Right lobe of liver (tissue), 6 donors: ENCODE measurements at regions of chr6 and their contacts with region 1.

Region 1: DNA sequence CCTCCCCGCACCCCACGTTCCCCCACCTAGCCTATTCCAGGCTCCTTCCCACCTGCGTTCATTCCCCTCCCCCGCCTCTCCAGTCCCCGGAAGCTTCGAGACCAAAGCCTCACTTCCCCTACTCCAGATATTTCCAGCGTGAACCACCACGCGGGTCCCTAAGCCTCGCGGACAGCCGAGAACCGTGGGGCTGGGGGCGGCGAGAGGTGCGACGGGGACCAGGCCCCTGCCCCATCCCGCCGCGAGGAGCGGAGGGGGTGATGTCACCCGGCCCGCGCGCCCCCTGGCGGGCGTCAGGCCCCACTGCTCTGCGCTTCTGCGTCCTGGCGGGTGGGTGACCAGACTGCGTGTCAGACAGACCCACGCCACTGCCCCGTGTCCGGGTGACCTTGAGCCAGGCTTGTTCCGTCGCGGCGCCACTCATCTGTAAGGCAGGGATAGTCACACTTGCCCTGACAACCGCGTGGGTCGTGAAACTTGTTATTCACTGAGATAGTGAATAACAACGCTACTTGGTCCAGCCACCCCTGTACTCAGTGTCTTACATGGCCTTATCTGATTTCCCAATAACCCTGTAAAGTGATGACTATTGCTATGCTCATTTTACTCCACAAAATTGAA is 9.0 kb upstream of the HSP90AB1 start:
- DNase-seq: peak; percentile 85 to 88 (median 85)
- ATAC-seq: peak; percentile 67 to 81 (median 72)
- H3K4me3 ChIP-seq: peak overlapping the region; percentile 44 to 67 (median 62)
- H3K27ac ChIP-seq: peak overlapping the region; percentile 97 to 99 (median 98)
- H3K4me1 ChIP-seq: peaks cover 0 to 42% (median 21%) of the 10 kb centered on the region in 4 donors
- H3K27me3 ChIP-seq: no peaks in the 10 kb centered on the region
- CTCF ChIP-seq: peak; percentile 97 to 99 (median 98)
- POLR2A ChIP-seq: no peak

Region 2: GRCh38 chr6:43790025-43790523 is 447.8 kb before region 1 on chr6:
- intact Hi-C with region 1: no loop called
- DNase-seq: peak in 1 of 3 donors; percentile 35
- ATAC-seq: no peak
- H3K4me3 ChIP-seq: no peak overlapping the region
- H3K27ac ChIP-seq: no peak overlapping the region
- H3K4me1 ChIP-seq: no peaks in the 10 kb centered on the region
- H3K27me3 ChIP-seq: no peaks in the 10 kb centered on the region
- CTCF ChIP-seq: no peak
- POLR2A ChIP-seq: no peak

Region 3: GRCh38 chr6:44100088-44100550 is 137.8 kb before region 1 on chr6:
- intact Hi-C with region 1: loop called in 1 of 2 experiments (anchors 10 kb)
- DNase-seq: no peak
- ATAC-seq: peak; percentile 60 to 76 (median 72)
- H3K4me3 ChIP-seq: no peak overlapping the region
- H3K27ac ChIP-seq: no peak overlapping the region
- H3K4me1 ChIP-seq: peaks cover 0 to 21% (median 6%) of the 10 kb centered on the region in 4 donors
- H3K27me3 ChIP-seq: no peaks in the 10 kb centered on the region
- CTCF ChIP-seq: peak; percentile 53 to 66 (median 62)
- POLR2A ChIP-seq: no peak

Region 4: DNA sequence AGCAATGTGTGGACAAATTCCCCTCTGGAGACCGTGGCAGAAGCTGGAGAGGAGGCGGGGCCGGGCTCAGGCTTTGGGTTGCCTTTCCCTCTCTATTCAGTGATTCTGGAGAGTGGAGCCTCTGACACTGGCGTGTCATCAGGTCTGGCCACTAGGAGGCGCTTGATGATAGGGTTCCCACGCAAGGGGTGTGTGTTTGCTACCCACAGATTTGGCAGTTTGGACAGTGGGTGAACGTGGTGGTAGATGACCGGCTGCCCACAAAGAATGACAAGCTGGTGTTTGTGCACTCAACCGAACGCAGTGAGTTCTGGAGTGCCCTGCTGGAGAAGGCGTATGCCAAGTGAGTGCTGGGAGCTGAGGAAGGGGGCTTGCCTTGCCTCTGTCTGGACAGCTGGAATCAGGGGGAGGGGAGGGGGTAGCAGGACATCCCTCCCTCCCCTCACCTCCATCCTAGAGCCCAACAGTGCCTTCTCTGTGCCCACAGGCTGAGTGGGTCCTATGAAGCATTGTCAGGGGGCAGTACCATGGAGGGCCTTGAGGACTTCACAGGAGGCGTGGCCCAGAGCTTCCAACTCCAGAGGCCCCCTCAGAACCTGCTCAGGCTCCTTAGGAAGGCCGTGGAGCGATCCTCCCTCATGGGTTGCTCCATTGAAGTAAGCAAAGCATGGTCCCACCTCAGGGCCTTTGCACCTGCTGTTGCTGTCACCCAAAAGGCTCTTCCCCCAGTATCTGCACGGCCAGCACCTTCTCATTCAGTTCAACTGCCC is 65.0 kb before region 1 on chr6:
- intact Hi-C with region 1: loop called (anchors 5 to 10 kb)
- DNase-seq: peak; percentile 86 to 91 (median 89)
- ATAC-seq: peak; percentile 96 to 99 (median 98)
- H3K4me3 ChIP-seq: no peak overlapping the region
- H3K27ac ChIP-seq: no peak overlapping the region
- H3K4me1 ChIP-seq: peaks cover 0 to 6% (median 0%) of the 10 kb centered on the region in 4 donors
- H3K27me3 ChIP-seq: no peaks in the 10 kb centered on the region
- CTCF ChIP-seq: peak; percentile 91 to 95 (median 94)
- POLR2A ChIP-seq: no peak

Region 5: DNA sequence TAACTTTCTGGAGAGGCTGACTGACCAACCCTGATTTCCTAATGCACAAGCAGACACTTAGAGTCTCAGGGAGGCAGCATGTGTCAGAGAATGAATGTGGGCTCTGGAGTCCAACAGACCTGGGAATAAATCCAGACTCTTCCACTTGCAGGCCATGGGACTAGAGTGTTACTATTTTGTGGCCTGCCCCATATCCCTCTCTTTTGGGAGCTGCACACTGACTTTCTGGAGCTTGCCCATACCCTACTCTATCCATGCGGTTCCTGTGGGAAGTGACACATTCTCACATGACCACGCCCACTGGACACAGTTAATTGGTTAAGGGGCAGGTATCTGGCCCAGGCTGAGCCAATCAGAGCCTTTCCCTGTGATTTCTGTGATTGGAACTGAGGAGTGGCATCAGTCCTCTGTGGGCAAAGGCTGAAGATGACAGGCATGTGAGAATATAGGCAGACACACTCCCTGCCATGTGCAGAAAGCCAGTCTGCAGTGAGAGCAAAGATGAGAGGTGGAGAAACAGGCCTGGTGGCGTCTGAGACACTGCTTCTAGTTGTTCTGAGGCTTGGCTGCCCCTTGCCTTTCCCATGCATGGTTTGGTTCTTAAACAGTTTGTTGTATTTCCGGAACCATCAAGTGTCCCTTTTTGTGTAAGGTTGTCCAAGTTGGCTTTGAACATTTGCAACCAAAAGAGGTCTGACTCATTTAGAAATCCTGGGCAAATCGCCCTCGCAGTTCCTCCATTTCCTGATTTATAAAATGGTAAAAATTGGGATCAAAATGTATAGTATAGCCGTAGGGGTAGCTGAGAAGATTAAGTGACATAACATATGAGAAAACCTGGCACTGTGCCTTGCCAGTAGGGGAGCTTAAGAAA is 275.2 kb after region 1 on chr6:
- intact Hi-C with region 1: no loop called
- DNase-seq: no peak
- ATAC-seq: no peak
- H3K4me3 ChIP-seq: no peak overlapping the region
- H3K27ac ChIP-seq: no peak overlapping the region
- H3K4me1 ChIP-seq: no peaks in the 10 kb centered on the region
- H3K27me3 ChIP-seq: no peaks in the 10 kb centered on the region
- CTCF ChIP-seq: no peak
- POLR2A ChIP-seq: no peak

Region 6: GRCh38 chr6:44630125-44631028 is 392.5 kb after region 1 on chr6:
- intact Hi-C with region 1: no loop called
- DNase-seq: peak in 1 of 3 donors; percentile 28
- ATAC-seq: peak; percentile 48 to 64 (median 61)
- H3K4me3 ChIP-seq: no peak overlapping the region
- H3K27ac ChIP-seq: no peak overlapping the region
- H3K4me1 ChIP-seq: no peaks in the 10 kb centered on the region
- H3K27me3 ChIP-seq: no peaks in the 10 kb centered on the region
- CTCF ChIP-seq: peak; percentile 28 to 46 (median 40)
- POLR2A ChIP-seq: no peak